H1 (cell line): ENCODE measurements at regions of chr2 and their contacts with region 1.

Region 1: GRCh38 chr2:71685078-71685848 is 231.9 kb downstream of the DYSF start:
- DNase-seq: no peak
- H3K4me3 ChIP-seq: no peak overlapping the region
- H3K27ac ChIP-seq: no peak overlapping the region
- H3K4me1 ChIP-seq: no peaks in the 10 kb centered on the region
- H3K27me3 ChIP-seq: no peaks in the 10 kb centered on the region
- CTCF ChIP-seq: no peak
- EP300 ChIP-seq: no peak
- POLR2A ChIP-seq: no peak
- RAD21 ChIP-seq: no peak

Region 2: GRCh38 chr2:71655498-71655897 is 29.8 kb before region 1 on chr2:
- CTCF ChIA-PET with region 1: no interaction called
- POLR2A ChIA-PET with region 1: no interaction called
- DNase-seq: no peak
- H3K4me3 ChIP-seq: no peak overlapping the region
- H3K27ac ChIP-seq: no peak overlapping the region
- H3K4me1 ChIP-seq: no peaks in the 10 kb centered on the region
- H3K27me3 ChIP-seq: no peaks in the 10 kb centered on the region
- CTCF ChIP-seq: no peak
- EP300 ChIP-seq: no peak
- POLR2A ChIP-seq: no peak
- RAD21 ChIP-seq: no peak

Region 3: GRCh38 chr2:71671895-71672825 is 13.1 kb before region 1 on chr2:
- CTCF ChIA-PET with region 1: interaction called, 12 read pairs
- POLR2A ChIA-PET with region 1: no interaction called
- DNase-seq: peak in 1 of 2 experiments; percentile 60
- H3K4me3 ChIP-seq: no peak overlapping the region
- H3K27ac ChIP-seq: no peak overlapping the region
- H3K4me1 ChIP-seq: no peaks in the 10 kb centered on the region; a peak in 1 of 7 replicates
- H3K27me3 ChIP-seq: no peaks in the 10 kb centered on the region
- CTCF ChIP-seq: peak; percentile 60 to 72 (median 71)
- EP300 ChIP-seq: no peak
- POLR2A ChIP-seq: no peak
- RAD21 ChIP-seq: peak; percentile 76 to 83